Dorsolateral prefrontal cortex (tissue), 120 donors: ENCODE measurements at regions of chr9 and their contacts with region 1.

Region 1: GRCh38 chr9:133485361-133486260 is 6.7 kb upstream of the SLC2A6 start:
- DNase-seq: no peak
- H3K4me3 ChIP-seq: peak overlapping the region in 1 of 59 donors; percentile 15
- H3K27ac ChIP-seq: peak overlapping the region in 2 of 59 donors; percentile 17 to 27
- H3K27me3 ChIP-seq: no peaks in the 10 kb centered on the region
- CTCF ChIP-seq: no peak

Region 2: DNA sequence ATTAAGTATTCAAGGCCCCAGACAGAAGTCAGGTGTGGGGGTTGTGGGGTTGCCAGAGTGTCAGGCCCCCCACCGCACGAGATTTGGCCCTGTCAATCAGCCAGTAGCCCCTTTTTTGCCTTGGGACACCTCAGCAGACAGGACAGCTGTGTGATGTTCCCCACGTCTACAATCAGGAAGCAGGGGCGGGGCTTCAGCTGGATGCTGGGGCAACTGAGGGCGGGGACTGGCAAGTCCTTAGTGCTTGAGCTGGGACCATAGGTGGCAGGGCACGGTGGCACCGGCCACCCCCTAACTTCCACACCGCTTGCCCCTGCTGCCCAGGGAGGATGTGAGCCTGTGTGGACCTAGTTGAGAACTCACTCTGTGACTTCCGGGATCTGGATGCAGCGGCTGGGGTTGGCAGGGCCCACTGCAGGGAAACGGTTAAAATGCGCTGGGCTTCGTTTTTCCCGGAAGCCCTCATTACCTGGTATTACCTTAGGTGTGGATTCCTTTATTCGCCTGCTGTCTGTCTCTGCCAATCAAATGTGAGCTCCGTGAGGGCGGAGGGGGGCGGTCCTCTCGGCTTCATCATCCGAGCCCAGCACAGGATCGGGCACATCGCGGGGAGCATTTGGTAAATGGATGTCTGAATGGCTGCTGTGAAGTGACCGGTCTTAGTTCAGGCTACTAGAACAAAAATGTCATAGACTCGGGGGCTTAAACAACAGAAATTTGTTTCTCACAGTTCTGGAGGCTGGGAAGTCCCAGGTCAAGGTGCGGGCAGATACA is 462.3 kb before region 1 on chr9:
- intact Hi-C with region 1: loop called in 1 of 2 experiments (anchors 10 kb)
- DNase-seq: no peak
- H3K4me3 ChIP-seq: no peak overlapping the region
- H3K27ac ChIP-seq: no peak overlapping the region
- H3K27me3 ChIP-seq: peaks cover 0 to 3% (median 0%) of the 10 kb centered on the region in 45 donors
- CTCF ChIP-seq: no peak

Region 3: DNA sequence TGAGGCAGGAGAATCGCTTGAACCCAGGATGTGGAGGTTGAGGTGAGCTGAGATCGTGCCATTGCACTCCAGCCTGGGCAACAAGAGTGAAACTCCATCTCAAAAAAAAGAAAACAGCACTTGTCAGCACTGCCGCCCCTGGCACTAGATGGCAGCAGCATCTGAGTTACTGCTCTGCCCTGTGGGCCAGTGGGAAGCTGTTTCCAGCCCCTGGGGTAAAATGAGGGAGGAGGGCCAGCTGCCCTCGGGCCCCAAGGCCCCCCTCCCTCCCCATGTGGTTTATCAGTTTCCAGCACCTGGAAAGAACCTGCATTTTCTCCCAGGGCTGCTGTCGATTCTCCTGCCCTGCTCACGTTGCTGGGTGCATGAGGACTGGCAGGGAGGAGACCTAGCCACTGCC is 437.0 kb before region 1 on chr9:
- intact Hi-C with region 1: loop called in 1 of 2 experiments (anchors 5 kb)
- DNase-seq: peak in 6 of 10 donors; percentile 36 to 66 (median 57)
- H3K4me3 ChIP-seq: no peak overlapping the region
- H3K27ac ChIP-seq: peak overlapping the region in 53 of 59 donors; percentile 9 to 98 (median 90)
- H3K27me3 ChIP-seq: no peaks in the 10 kb centered on the region
- CTCF ChIP-seq: peak in 54 of 56 donors; percentile 18 to 76 (median 56)

Region 4: GRCh38 chr9:133115448-133116345 is 369.9 kb before region 1 on chr9:
- intact Hi-C with region 1: loop called in 1 of 2 experiments (anchors 10 kb)
- DNase-seq: peak in 7 of 10 donors; percentile 18 to 82 (median 57)
- H3K4me3 ChIP-seq: peak overlapping the region in 51 of 59 donors; percentile 0 to 98 (median 34)
- H3K27ac ChIP-seq: peak overlapping the region; percentile 39 to 100 (median 98)
- H3K27me3 ChIP-seq: no peaks in the 10 kb centered on the region
- CTCF ChIP-seq: no peak

Region 5: DNA sequence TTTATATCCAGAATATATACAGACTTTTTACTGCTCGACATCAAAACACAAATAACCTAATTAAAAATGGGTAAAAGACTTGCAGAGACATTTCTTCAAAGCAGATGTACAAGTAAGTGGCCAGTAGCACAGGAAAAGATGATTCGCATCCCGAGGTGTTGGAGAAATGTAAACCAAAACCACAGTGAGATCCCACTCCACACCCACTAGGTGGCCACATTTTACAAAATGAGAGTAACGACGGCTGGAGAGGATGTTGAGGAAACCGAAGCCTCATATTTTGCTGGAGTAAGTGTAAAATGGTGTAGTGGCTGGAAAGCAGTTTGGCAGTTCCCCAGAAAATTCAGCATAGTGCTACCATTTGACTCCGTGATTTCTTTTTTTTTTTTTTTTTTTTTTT is 300.6 kb before region 1 on chr9:
- intact Hi-C with region 1: loop called (anchors 5 kb)
- DNase-seq: peak in 4 of 10 donors; percentile 27 to 74 (median 44)
- H3K4me3 ChIP-seq: peak overlapping the region in 1 of 59 donors; percentile 7
- H3K27ac ChIP-seq: no peak overlapping the region
- H3K27me3 ChIP-seq: peaks cover 0 to 5% (median 0%) of the 10 kb centered on the region in 45 donors
- CTCF ChIP-seq: peak; percentile 51 to 78 (median 66)

Region 6: GRCh38 chr9:133252301-133252780 is 233.3 kb before region 1 on chr9:
- intact Hi-C with region 1: no loop called
- DNase-seq: peak in 1 of 10 donors; percentile 21
- H3K4me3 ChIP-seq: peak overlapping the region in 5 of 59 donors; percentile 1 to 26 (median 8)
- H3K27ac ChIP-seq: no peak overlapping the region
- H3K27me3 ChIP-seq: peaks cover 0 to 1% (median 0%) of the 10 kb centered on the region in 45 donors
- CTCF ChIP-seq: no peak

Region 7: DNA sequence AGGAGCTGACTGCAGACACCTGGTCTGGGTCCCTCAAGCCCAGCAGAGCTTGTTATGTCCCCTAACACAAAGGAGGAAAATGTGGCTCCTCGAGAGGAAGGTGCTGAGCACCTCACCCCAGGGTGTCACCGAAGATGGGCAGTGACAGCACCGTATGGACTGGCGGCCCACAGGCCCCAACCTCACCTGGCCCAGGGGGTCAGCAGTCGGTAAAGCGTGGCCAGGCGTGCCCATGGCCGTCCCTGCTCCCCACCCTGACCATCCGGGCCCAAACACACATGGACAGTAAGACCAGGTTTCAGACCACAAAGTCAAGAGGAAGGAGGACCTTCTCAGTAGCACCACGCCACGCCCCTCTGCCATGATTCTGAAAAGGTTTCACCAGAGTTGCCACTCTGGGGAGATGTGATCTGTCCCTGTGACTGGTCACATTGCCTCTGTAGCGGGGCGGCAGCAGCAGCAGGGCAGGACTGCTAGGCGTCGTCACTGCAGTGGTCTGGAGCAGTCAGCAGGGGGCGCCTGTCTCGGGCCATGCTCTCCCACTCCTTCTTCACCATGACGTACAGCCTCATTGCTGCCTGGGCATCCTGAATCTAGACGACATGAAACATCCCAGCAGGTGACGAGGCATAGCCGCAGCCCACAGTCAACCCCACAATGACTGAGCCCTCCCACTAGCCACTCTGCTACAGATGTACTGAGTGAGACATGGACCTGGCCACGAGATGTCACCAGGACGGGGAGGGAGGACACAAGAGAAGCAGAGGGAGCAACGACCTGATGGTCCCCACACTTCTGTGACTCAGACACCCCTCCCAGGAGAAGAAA is 78.9 kb before region 1 on chr9:
- intact Hi-C with region 1: loop called (anchors 2 to 5 kb)
- DNase-seq: peak; percentile 67 to 89 (median 82)
- H3K4me3 ChIP-seq: no peak overlapping the region
- H3K27ac ChIP-seq: peak overlapping the region in 16 of 59 donors; percentile 7 to 65 (median 28)
- H3K27me3 ChIP-seq: no peaks in the 10 kb centered on the region
- CTCF ChIP-seq: peak; percentile 66 to 97 (median 92)

Region 8: DNA sequence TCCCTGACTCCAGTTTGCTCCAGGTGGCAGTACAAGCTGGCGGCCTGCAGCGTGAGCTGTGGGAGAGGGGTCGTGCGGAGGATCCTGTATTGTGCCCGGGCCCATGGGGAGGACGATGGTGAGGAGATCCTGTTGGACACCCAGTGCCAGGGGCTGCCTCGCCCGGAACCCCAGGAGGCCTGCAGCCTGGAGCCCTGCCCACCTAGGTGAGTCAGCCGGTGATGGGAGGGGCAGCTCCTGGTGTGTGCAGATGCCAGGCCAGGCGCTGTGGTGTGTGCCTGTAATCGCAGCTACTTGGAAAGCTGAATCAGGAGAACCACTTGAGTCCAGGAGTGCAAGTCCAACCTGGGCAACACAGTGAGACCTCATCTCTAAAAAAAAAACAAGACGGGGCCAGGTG is 35.9 kb before region 1 on chr9:
- intact Hi-C with region 1: no loop called
- DNase-seq: no peak
- H3K4me3 ChIP-seq: no peak overlapping the region
- H3K27ac ChIP-seq: no peak overlapping the region
- H3K27me3 ChIP-seq: no peaks in the 10 kb centered on the region
- CTCF ChIP-seq: no peak

Region 9: DNA sequence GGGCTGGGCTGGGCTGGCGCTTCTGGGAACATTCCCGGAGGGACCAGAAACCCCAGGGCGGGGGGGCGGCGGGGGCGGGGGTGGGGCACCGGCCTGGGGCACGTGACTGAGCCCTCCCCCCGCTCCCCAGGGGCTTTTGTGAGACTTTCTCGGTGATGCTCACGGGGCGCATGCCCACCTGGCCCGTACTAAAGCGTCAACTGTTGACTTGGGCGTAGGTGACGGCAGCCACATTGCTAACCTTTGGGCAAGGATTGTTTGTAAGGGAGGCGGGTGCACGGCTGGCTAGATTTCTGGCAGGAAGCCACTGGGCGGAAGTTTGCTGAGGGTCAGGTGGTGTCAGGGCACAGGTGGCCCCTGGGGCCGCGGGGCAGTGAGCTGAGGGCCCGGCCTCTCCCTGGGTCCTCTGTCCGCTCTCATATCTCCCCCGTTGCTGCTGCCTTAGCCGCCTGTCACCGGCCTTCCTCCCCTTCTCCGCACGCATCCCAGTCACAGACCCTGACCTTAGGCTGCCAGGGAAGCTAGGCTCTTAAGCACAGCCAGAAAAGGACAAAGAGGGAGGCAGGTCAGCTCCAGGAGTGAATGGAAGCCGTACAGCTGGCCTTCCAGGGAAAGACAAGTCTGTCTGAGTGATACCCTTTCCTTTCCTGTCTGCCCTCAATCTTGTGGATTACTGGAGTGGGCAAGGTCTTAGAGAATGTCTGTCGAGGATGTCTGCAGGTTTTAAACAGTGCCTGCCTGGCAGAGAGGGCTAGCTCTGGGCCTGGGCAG is 25.0 kb before region 1 on chr9:
- intact Hi-C with region 1: no loop called
- DNase-seq: peak in 6 of 10 donors; percentile 34 to 65 (median 50)
- H3K4me3 ChIP-seq: peak overlapping the region; percentile 55 to 96 (median 80)
- H3K27ac ChIP-seq: peak overlapping the region; percentile 83 to 99 (median 97)
- H3K27me3 ChIP-seq: no peaks in the 10 kb centered on the region
- CTCF ChIP-seq: no peak